Mammary epithelial cell (primary cell): ENCODE measurements at regions of chr10 and their contacts with region 1.

Region 1: GRCh38 chr10:123994417-123995081 is 98.8 kb downstream of the CHST15 start:
- DNase-seq: peak; percentile 88
- H3K4me3 ChIP-seq: peak overlapping the region in 1 of 3 experiments; percentile 4
- H3K27ac ChIP-seq: peak overlapping the region; percentile 72
- H3K4me1 ChIP-seq: peaks cover 45% of the 10 kb centered on the region
- H3K27me3 ChIP-seq: no peaks in the 10 kb centered on the region
- CTCF ChIP-seq: peak; percentile 85 to 94

Region 2: GRCh38 chr10:124092860-124093773 is 98.6 kb after region 1 on chr10 and contains the start of gene CHST15:
- CTCF ChIA-PET with region 1: interaction called, 7 read pairs
- dilution Hi-C with region 1: loop called (anchors 5 kb)
- in situ Hi-C with region 1: no loop called
- intact Hi-C with region 1: loop called (anchors 1 kb)
- DNase-seq: peak; percentile 90
- H3K4me3 ChIP-seq: peak within 1 kb of the TSS; percentile 75 to 87 (median 82)
- H3K27ac ChIP-seq: peak within 1 kb of the TSS; percentile 81
- H3K4me1 ChIP-seq: peaks cover 16% of the 10 kb centered on the region
- H3K27me3 ChIP-seq: no peaks in the 10 kb centered on the region
- CTCF ChIP-seq: peak in 1 of 2 donors; percentile 28
- total RNA-seq, gene CHST15: 47.3 to 61.0 TPM

Region 3: GRCh38 chr10:124206616-124207015 is 212.1 kb after region 1 on chr10:
- CTCF ChIA-PET with region 1: no interaction called
- dilution Hi-C with region 1: loop called (anchors 5 kb)
- in situ Hi-C with region 1: no loop called
- intact Hi-C with region 1: no loop called
- DNase-seq: no peak
- H3K4me3 ChIP-seq: no peak overlapping the region
- H3K27ac ChIP-seq: no peak overlapping the region
- H3K4me1 ChIP-seq: no peaks in the 10 kb centered on the region
- H3K27me3 ChIP-seq: no peaks in the 10 kb centered on the region
- CTCF ChIP-seq: no peak

Region 4: GRCh38 chr10:124267231-124267885 is 272.8 kb after region 1 on chr10:
- CTCF ChIA-PET with region 1: no interaction called
- dilution Hi-C with region 1: no loop called
- in situ Hi-C with region 1: no loop called
- intact Hi-C with region 1: loop called (anchors 10 kb)
- DNase-seq: no peak
- H3K4me3 ChIP-seq: no peak overlapping the region
- H3K27ac ChIP-seq: no peak overlapping the region
- H3K4me1 ChIP-seq: peaks cover 3% of the 10 kb centered on the region
- H3K27me3 ChIP-seq: peaks cover 2% of the 10 kb centered on the region
- CTCF ChIP-seq: no peak

Region 5: GRCh38 chr10:124378881-124379471 is 384.4 kb after region 1 on chr10:
- CTCF ChIA-PET with region 1: no interaction called
- dilution Hi-C with region 1: no loop called
- in situ Hi-C with region 1: loop called in 1 of 2 experiments (anchors 5 kb)
- intact Hi-C with region 1: no loop called
- DNase-seq: peak; percentile 90
- H3K4me3 ChIP-seq: no peak overlapping the region
- H3K27ac ChIP-seq: no peak overlapping the region
- H3K4me1 ChIP-seq: peaks cover 12% of the 10 kb centered on the region
- H3K27me3 ChIP-seq: no peaks in the 10 kb centered on the region
- CTCF ChIP-seq: no peak

Region 6: GRCh38 chr10:124508070-124508667 is 513.6 kb after region 1 on chr10:
- CTCF ChIA-PET with region 1: no interaction called
- dilution Hi-C with region 1: no loop called
- in situ Hi-C with region 1: no loop called
- intact Hi-C with region 1: loop called (anchors 10 kb)
- DNase-seq: no peak
- H3K4me3 ChIP-seq: no peak overlapping the region
- H3K27ac ChIP-seq: no peak overlapping the region
- H3K4me1 ChIP-seq: peaks cover 11% of the 10 kb centered on the region
- H3K27me3 ChIP-seq: no peaks in the 10 kb centered on the region
- CTCF ChIP-seq: no peak